B cell (primary cell): ENCODE measurements at regions of chr3 and their contacts with region 1.

Region 1: GRCh38 chr3:52225452-52226228 is at the start of gene TLR9:
- DNase-seq: peak; percentile 94
- ATAC-seq: peak; percentile 89
- H3K4me3 ChIP-seq: peak within 1 kb of the TSS; percentile 39 to 90 (median 66)
- H3K4me3 Mint-ChIP-seq: peak within 1 kb of the TSS; percentile 94
- H3K27ac ChIP-seq: peak within 1 kb of the TSS; percentile 78 to 88
- H3K27ac Mint-ChIP-seq: peak within 1 kb of the TSS; percentile 99
- H3K4me1 ChIP-seq: peaks cover 46 to 69% of the 10 kb centered on the region in 2 donors
- H3K4me1 Mint-ChIP-seq: peaks cover 69% of the 10 kb centered on the region
- H3K27me3 ChIP-seq: no peaks in the 10 kb centered on the region
- H3K27me3 Mint-ChIP-seq: no peaks in the 10 kb centered on the region
- CTCF ChIP-seq: no peak
- total RNA-seq, gene TLR9: 16.0 and 21.0 TPM in 2 replicates

Region 2: DNA sequence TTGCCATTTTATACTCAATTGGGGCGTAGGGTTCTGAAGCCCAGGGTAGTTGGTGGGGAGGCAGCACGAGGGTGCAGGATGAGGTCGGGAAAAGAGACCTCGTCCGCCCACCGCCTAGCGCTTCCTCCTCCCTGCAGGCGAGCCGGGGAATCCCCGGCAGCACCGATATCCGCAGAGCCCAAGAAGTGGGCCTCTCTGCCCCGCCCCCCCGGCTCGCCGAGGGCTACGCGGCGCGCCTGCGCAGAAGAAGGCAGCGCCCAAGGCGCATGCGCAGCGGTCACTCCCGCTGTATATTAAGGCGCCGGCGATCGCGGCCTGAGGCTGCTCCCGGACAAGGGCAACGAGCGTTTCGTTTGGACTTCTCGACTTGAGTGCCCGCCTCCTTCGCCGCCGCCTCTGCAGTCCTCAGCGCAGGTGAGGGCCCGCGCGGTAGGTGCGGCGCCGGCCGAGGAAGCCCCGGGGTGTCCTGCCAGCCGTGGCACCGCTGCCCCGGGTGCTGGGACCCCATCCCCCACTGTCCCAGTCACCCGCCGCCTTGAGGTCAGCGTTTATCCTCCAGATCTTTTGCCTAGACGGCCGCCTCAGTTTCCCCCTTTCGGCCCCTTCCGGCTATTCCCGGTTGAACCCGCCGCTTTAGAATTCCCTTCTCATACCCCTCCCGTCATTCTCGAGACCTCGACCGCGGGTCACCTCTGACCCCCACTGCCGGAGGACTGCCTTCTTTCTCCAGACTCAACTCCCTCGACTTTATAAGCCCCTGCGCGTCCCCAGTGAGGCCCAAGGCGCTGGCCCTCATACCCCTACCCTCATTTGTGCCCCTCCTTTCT is 27.6 kb before region 1 on chr3 and contains the start of gene ALAS1:
- CTCF ChIA-PET with region 1: interaction called, 6 read pairs
- POLR2A ChIA-PET with region 1: interaction called, 4 read pairs
- intact Hi-C with region 1: loop called (anchors 1 kb)
- DNase-seq: peak; percentile 96
- ATAC-seq: peak; percentile 96
- H3K4me3 ChIP-seq: peak within 1 kb of the TSS; percentile 9 to 90 (median 86)
- H3K4me3 Mint-ChIP-seq: peak within 1 kb of the TSS; percentile 92
- H3K27ac ChIP-seq: peak within 1 kb of the TSS; percentile 41 to 79
- H3K27ac Mint-ChIP-seq: peak within 1 kb of the TSS; percentile 90
- H3K4me1 ChIP-seq: peaks cover 19 to 33% of the 10 kb centered on the region in 2 donors
- H3K4me1 Mint-ChIP-seq: peaks cover 42% of the 10 kb centered on the region
- H3K27me3 ChIP-seq: no peaks in the 10 kb centered on the region
- H3K27me3 Mint-ChIP-seq: no peaks in the 10 kb centered on the region
- CTCF ChIP-seq: no peak
- total RNA-seq, gene ALAS1: 26.1 and 28.3 TPM in 2 replicates

Region 3: DNA sequence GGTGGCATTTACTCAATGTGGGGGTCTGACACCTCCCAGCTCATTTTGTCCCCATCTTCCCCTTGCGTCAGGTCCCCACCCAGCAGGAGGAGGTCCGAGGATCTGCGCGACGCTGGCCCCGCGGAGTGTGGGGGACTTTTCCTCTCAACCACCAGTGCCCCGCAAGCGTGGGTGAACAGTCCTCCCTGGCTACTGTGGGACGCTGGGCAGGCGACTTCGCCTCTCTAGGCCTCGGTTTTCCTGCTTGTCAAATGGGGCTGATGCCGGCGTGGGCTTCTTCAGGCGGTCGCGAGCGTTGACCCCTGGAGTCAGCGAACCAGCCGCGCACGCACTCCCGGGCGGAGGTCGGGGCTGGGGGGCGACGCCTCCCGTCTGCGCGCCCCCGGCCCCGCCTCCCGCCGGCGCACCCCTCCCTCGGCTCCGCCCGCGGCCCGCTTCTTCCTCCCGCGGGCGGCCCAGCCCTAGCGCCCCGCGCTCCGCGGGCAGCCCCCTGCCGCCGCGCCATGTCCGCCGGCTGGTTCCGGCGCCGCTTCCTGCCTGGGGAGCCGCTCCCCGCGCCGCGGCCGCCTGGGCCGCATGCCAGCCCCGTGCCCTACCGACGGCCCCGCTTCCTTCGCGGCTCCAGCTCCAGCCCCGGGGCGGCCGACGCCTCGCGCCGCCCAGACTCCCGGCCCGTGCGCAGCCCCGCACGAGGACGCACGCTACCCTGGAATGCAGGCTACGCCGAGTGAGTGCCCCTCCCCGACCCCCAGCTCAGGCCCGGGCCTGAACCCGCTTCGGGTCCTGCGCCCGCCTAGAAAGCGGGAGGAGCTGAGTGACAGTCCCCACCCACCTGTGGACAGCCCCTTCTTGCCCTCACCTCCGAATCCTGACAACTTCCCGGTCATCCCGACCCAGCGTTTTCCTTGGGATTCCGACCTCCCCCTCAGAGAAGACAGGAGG is 20.0 kb after region 1 on chr3 and contains the start of gene PPM1M:
- CTCF ChIA-PET with region 1: interaction called, 237 read pairs
- POLR2A ChIA-PET with region 1: interaction called, 10 read pairs
- intact Hi-C with region 1: no loop called
- DNase-seq: peak; percentile 71
- ATAC-seq: peak; percentile 64
- H3K4me3 ChIP-seq: peak within 1 kb of the TSS; percentile 36 to 85 (median 76)
- H3K4me3 Mint-ChIP-seq: peak within 1 kb of the TSS; percentile 87
- H3K27ac ChIP-seq: peak within 1 kb of the TSS; percentile 71 to 83
- H3K27ac Mint-ChIP-seq: peak within 1 kb of the TSS; percentile 96
- H3K4me1 ChIP-seq: peaks cover 36 to 42% of the 10 kb centered on the region in 2 donors
- H3K4me1 Mint-ChIP-seq: peaks cover 55% of the 10 kb centered on the region
- H3K27me3 ChIP-seq: no peaks in the 10 kb centered on the region
- H3K27me3 Mint-ChIP-seq: no peaks in the 10 kb centered on the region
- CTCF ChIP-seq: no peak
- total RNA-seq, gene PPM1M: 45.0 and 53.6 TPM in 2 replicates

Region 4: GRCh38 chr3:52291508-52292181 is 66.0 kb after region 1 on chr3:
- CTCF ChIA-PET with region 1: interaction called, 265 read pairs
- POLR2A ChIA-PET with region 1: interaction called, 23 read pairs
- intact Hi-C with region 1: loop called (anchors 1 kb)
- DNase-seq: peak; percentile 65
- ATAC-seq: peak; percentile 31
- H3K4me3 ChIP-seq: no peak overlapping the region
- H3K4me3 Mint-ChIP-seq: peak overlapping the region; percentile 37
- H3K27ac ChIP-seq: no peak overlapping the region
- H3K27ac Mint-ChIP-seq: peak overlapping the region; percentile 33
- H3K4me1 ChIP-seq: peaks cover 12 to 15% of the 10 kb centered on the region in 2 donors
- H3K4me1 Mint-ChIP-seq: peaks cover 30% of the 10 kb centered on the region
- H3K27me3 ChIP-seq: no peaks in the 10 kb centered on the region
- H3K27me3 Mint-ChIP-seq: no peaks in the 10 kb centered on the region
- CTCF ChIP-seq: peak; percentile 69

Region 5: GRCh38 chr3:52455283-52456168 is 229.9 kb after region 1 on chr3 and contains the start of gene NISCH:
- CTCF ChIA-PET with region 1: no interaction called
- POLR2A ChIA-PET with region 1: no interaction called
- intact Hi-C with region 1: loop called (anchors 5 kb)
- DNase-seq: peak; percentile 94
- ATAC-seq: peak; percentile 97
- H3K4me3 ChIP-seq: peak within 1 kb of the TSS; percentile 50 to 81 (median 70)
- H3K4me3 Mint-ChIP-seq: peak within 1 kb of the TSS; percentile 88
- H3K27ac ChIP-seq: peak within 1 kb of the TSS; percentile 88 to 92
- H3K27ac Mint-ChIP-seq: peak within 1 kb of the TSS; percentile 94
- H3K4me1 ChIP-seq: peaks cover 16 to 27% of the 10 kb centered on the region in 2 donors
- H3K4me1 Mint-ChIP-seq: peaks cover 38% of the 10 kb centered on the region
- H3K27me3 ChIP-seq: no peaks in the 10 kb centered on the region
- H3K27me3 Mint-ChIP-seq: no peaks in the 10 kb centered on the region
- CTCF ChIP-seq: no peak
- total RNA-seq, gene NISCH: 161 and 169 TPM in 2 replicates

Region 6: GRCh38 chr3:52730681-52731080 is 505.0 kb after region 1 on chr3:
- CTCF ChIA-PET with region 1: no interaction called
- POLR2A ChIA-PET with region 1: no interaction called
- intact Hi-C with region 1: no loop called
- DNase-seq: no peak
- ATAC-seq: no peak
- H3K4me3 ChIP-seq: no peak overlapping the region
- H3K4me3 Mint-ChIP-seq: no peak overlapping the region
- H3K27ac ChIP-seq: no peak overlapping the region
- H3K27ac Mint-ChIP-seq: no peak overlapping the region
- H3K4me1 ChIP-seq: no peaks in the 10 kb centered on the region
- H3K4me1 Mint-ChIP-seq: peaks cover 4% of the 10 kb centered on the region
- H3K27me3 ChIP-seq: no peaks in the 10 kb centered on the region
- H3K27me3 Mint-ChIP-seq: no peaks in the 10 kb centered on the region
- CTCF ChIP-seq: no peak